HepG2 (cell line): ENCODE measurements at regions of chr1 and their contacts with region 1.

Region 1: GRCh38 chr1:12019858-12020509 is 686 bp downstream of the MIIP start:
- DNase-seq: no peak
- ATAC-seq: peak; percentile 44; the same call in 2 of the 3 replicates
- H3K4me3 ChIP-seq: peak overlapping the region; percentile 68 to 85 (median 82)
- H3K27ac ChIP-seq: peak overlapping the region; percentile 91
- H3K4me1 ChIP-seq: peaks cover 9% of the 10 kb centered on the region
- H3K27me3 ChIP-seq: no peaks in the 10 kb centered on the region
- CTCF ChIP-seq: no peak
- EP300 ChIP-seq: no peak
- POLR2A ChIP-seq: no peak
- RAD21 ChIP-seq: no peak

Region 2: GRCh38 chr1:11647333-11647732 is 372.7 kb before region 1 on chr1:
- CTCF ChIA-PET with region 1: no interaction called
- POLR2A ChIA-PET with region 1: no interaction called
- in situ Hi-C with region 1: no loop called
- intact Hi-C with region 1: no loop called
- DNase-seq: no peak
- ATAC-seq: no peak
- H3K4me3 ChIP-seq: no peak overlapping the region
- H3K27ac ChIP-seq: no peak overlapping the region
- H3K4me1 ChIP-seq: peaks cover 55% of the 10 kb centered on the region
- H3K27me3 ChIP-seq: no peaks in the 10 kb centered on the region
- CTCF ChIP-seq: no peak
- EP300 ChIP-seq: no peak
- POLR2A ChIP-seq: no peak
- RAD21 ChIP-seq: no peak

Region 3: GRCh38 chr1:11913291-11913690 is 106.7 kb before region 1 on chr1:
- CTCF ChIA-PET with region 1: no interaction called
- POLR2A ChIA-PET with region 1: interaction called, 16 read pairs
- in situ Hi-C with region 1: no loop called
- intact Hi-C with region 1: no loop called
- DNase-seq: peak; percentile 38
- ATAC-seq: no peak
- H3K4me3 ChIP-seq: 0 out of 6 replicates have a peak overlapping the region, but pooled peaks of 1 of the 3 experiments have one; percentile 22
- H3K27ac ChIP-seq: no peak overlapping the region
- H3K4me1 ChIP-seq: peaks cover 64% of the 10 kb centered on the region
- H3K27me3 ChIP-seq: no peaks in the 10 kb centered on the region
- CTCF ChIP-seq: no peak
- EP300 ChIP-seq: no peak
- POLR2A ChIP-seq: no peak
- RAD21 ChIP-seq: no peak

Region 4: DNA sequence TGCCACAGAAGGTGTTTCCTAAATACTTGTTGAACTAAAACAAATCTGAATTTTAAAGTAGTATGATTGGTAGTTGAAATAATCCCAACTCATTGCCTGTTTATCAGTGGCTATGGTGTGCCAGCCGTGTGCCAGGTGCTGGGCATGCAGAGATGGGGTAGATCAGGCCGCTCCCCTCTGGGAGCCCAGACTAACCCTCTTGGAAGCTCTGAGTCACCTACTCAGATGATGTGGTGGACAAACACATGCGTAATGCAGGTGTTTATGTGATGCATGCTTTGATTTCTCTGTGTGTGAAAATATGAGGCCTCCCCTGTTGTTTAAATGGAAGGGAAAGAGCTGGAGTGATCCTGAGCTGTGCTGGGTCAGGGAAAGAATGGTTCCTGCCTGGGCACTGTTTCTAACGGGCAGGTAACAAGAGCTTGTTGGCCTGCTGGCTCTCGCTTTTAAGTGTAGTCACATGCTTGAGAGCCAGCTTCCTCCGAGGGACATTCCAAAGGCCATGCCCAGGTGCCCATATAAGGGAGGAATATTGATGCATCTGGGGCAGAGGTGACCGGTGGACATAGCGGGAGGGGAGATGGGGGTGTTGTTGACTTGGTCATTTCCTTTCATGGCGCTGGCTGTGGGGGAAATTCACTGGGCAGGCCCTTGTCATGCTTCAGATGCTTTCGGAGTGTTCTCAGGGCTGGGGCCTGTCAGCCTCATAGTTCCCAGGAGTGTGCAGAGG is 29.5 kb before region 1 on chr1:
- CTCF ChIA-PET with region 1: no interaction called
- POLR2A ChIA-PET with region 1: interaction called, 15 read pairs
- in situ Hi-C with region 1: no loop called
- intact Hi-C with region 1: no loop called
- DNase-seq: peak; percentile 67
- ATAC-seq: peak; percentile 84
- H3K4me3 ChIP-seq: no peak overlapping the region
- H3K27ac ChIP-seq: peak overlapping the region; percentile 73
- H3K4me1 ChIP-seq: peaks cover 45% of the 10 kb centered on the region
- H3K27me3 ChIP-seq: no peaks in the 10 kb centered on the region
- CTCF ChIP-seq: no peak
- EP300 ChIP-seq: no peak; a peak in 1 of 4 replicates
- POLR2A ChIP-seq: peak in 1 of 2 experiments; percentile 49; a peak in 1 of 4 replicates
- RAD21 ChIP-seq: no peak

Region 5: DNA sequence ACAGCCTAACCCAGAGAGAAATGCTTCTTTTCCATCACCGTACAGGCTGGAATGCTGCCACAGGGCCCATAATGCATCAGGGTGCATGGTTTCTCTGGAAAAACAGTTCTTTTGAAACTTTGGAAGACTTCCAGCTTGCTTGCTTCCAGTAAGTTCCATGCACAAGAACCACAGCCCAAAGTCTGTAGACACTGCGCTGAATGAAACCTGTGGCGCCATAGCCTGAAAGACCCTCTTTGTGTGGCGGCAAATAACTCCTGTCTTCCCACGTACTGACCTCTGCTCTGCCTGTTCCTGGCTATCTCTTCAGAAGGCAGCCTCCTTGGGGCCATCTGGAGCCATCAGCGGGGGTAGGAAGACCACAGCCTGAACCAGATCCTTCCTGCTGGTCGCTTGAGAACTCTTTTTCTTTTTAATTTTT is 14.4 kb after region 1 on chr1:
- CTCF ChIA-PET with region 1: no interaction called
- POLR2A ChIA-PET with region 1: interaction called, 13 read pairs
- in situ Hi-C with region 1: no loop called
- intact Hi-C with region 1: no loop called
- DNase-seq: peak; percentile 73
- ATAC-seq: peak; percentile 36
- H3K4me3 ChIP-seq: peak overlapping the region in 1 of 3 experiments; percentile 50; a peak in 1 of 6 replicates
- H3K27ac ChIP-seq: peak overlapping the region; percentile 51
- H3K4me1 ChIP-seq: peaks cover 25% of the 10 kb centered on the region
- H3K27me3 ChIP-seq: peaks cover 2 to 9% of the 10 kb centered on the region in 2 experiments; a peak in 2 of 5 replicates
- CTCF ChIP-seq: no peak
- EP300 ChIP-seq: peak in 1 of 2 experiments; percentile 41; a peak in 1 of 4 replicates
- POLR2A ChIP-seq: no peak
- RAD21 ChIP-seq: no peak

Region 6: GRCh38 chr1:12143631-12144155 is 123.7 kb after region 1 on chr1:
- CTCF ChIA-PET with region 1: no interaction called
- POLR2A ChIA-PET with region 1: no interaction called
- in situ Hi-C with region 1: no loop called
- intact Hi-C with region 1: no loop called
- DNase-seq: no peak
- ATAC-seq: 0 out of 3 replicates have a peak, but pooled peaks have one; percentile 12
- H3K4me3 ChIP-seq: no peak overlapping the region; a peak in 1 of 6 replicates
- H3K27ac ChIP-seq: no peak overlapping the region
- H3K4me1 ChIP-seq: peaks cover 41% of the 10 kb centered on the region
- H3K27me3 ChIP-seq: peaks cover 2 to 51% of the 10 kb centered on the region in 2 experiments; a peak in 4 of 5 replicates
- CTCF ChIP-seq: no peak
- EP300 ChIP-seq: no peak
- POLR2A ChIP-seq: no peak
- RAD21 ChIP-seq: no peak